ENCODE measurements at regions of chr19 and their contacts with region 1.

Region 1: DNA sequence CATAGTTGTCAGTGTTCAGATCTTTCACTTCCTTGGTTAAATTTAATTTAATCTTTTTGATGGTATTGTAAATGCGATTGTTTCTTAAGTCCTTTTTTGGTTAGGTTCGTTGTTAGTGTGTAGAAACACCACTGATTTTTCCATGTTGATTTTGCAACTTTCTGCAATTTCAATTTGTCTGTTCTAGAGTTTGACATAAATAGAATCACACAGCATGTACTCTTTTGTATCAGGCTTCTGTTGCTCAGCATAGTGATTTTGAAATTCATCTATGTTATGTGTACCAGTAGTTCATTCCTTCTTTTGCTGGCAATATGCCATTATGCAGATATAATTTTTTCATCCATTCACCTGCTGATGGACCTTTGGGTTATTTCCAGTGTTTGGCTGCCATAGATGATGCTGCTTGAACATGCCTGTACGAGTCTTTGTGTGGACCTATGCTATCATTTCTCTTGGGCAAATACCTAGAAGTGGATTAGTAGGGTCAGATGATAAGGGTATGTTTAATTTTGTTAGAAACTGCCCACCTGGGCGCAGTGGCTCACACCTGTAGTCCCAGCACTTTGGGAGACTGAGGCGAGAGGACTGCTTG is 33.1 kb downstream of the BICRA start:
- DNase-seq: no peak
- ATAC-seq: no peak
- H3K4me3 ChIP-seq: no peak overlapping the region
- H3K27ac ChIP-seq: no peak overlapping the region
- H3K4me1 ChIP-seq: peaks cover 0 to 41% (median 20%) of the 10 kb centered on the region in 12 donors
- H3K27me3 ChIP-seq: no peaks in the 10 kb centered on the region
- CTCF ChIP-seq: no peak
- POLR2A ChIP-seq: no peak

Region 2: DNA sequence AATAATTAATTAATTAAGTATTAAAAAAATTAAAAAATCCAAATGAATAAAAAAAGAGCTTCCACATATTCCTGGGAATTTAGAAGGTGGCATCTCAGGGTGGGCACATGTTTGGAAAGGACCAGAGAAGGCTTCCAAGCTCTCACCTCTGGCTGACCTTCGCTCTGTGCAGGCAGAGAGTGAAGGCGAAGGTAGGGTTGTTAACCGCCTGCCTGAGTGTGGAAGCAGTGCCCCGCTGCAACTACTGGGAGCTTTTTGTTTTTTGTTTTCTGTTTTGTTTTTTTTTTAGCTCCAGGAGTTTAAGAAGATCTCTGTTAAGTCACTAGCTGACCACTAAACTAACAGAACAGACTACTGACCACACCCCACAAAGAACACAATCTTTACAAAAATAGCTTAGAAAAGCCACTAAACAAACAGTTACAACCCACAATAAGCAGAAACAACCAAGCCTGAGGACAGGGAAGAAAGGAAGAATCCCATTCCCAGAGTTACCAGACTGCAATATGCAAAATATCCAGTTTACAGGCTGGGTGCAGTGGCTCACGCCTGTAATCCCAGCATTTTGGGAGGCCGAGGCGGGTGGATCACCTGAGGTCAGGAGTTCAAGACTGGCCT is 80.4 kb before region 1 on chr19:
- intact Hi-C with region 1: no loop called
- DNase-seq: no peak
- ATAC-seq: no peak
- H3K4me3 ChIP-seq: no peak overlapping the region
- H3K27ac ChIP-seq: no peak overlapping the region
- H3K4me1 ChIP-seq: no peaks in the 10 kb centered on the region
- H3K27me3 ChIP-seq: no peaks in the 10 kb centered on the region
- CTCF ChIP-seq: no peak
- POLR2A ChIP-seq: no peak

Region 3: DNA sequence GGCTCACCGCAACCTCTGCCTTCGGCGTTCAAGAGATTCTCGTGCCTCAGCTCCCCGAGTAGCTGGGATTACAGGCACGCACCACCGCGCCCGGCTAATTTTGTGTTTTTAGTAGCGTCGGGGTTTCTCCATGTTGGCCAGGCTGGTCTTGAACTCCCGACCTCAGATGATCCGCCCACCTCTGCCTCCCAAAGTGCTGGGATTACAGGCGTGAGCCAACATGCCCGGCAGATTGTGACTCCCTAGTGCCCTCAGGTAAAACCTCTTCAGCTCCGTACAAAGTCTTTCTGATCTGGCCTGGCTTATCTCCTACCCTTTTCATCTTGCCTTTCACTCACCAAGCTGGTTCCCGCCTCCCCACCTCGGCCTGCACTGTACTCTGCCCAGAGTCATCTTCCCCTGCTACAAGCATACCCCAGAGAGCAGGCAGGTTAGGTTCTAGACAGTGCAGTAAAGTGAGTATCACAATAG is 18.0 kb before region 1 on chr19:
- intact Hi-C with region 1: loop called in 1 of 10 experiments (anchors 1 kb)
- DNase-seq: no peak
- ATAC-seq: peak in 3 of 4 donors; percentile 14 to 27 (median 15)
- H3K4me3 ChIP-seq: no peak overlapping the region
- H3K27ac ChIP-seq: peak overlapping the region in 7 of 12 donors; percentile 36 to 72 (median 44)
- H3K4me1 ChIP-seq: peaks cover 0 to 70% (median 30%) of the 10 kb centered on the region in 12 donors
- H3K27me3 ChIP-seq: no peaks in the 10 kb centered on the region
- CTCF ChIP-seq: no peak
- POLR2A ChIP-seq: no peak

Region 4: GRCh38 chr19:47652285-47652684 is 10.3 kb after region 1 on chr19:
- intact Hi-C with region 1: no loop called
- DNase-seq: no peak
- ATAC-seq: no peak
- H3K4me3 ChIP-seq: no peak overlapping the region
- H3K27ac ChIP-seq: no peak overlapping the region
- H3K4me1 ChIP-seq: peaks cover 0 to 23% (median 0%) of the 10 kb centered on the region in 12 donors
- H3K27me3 ChIP-seq: no peaks in the 10 kb centered on the region
- CTCF ChIP-seq: no peak
- POLR2A ChIP-seq: no peak